Activated CD4-positive, alpha-beta memory T cell treated with anti-CD3 and anti-CD28 coated beads for 36 hours (primary cell): ENCODE measurements at regions of chr9 and their contacts with region 1.

Region 1: GRCh38 chr9:137129456-137130175 is 9.3 kb upstream of the GRIN1 start:
- DNase-seq: peak; percentile 94
- H3K4me3 Mint-ChIP-seq: peak overlapping the region; percentile 84
- H3K27ac Mint-ChIP-seq: peak overlapping the region; percentile 70
- H3K4me1 Mint-ChIP-seq: peaks cover 20% of the 10 kb centered on the region
- H3K27me3 Mint-ChIP-seq: peaks cover 2% of the 10 kb centered on the region

Region 2: GRCh38 chr9:137053944-137054931 is 75.4 kb before region 1 on chr9 and contains the start of gene ENTPD2:
- CTCF ChIA-PET with region 1: no interaction called
- POLR2A ChIA-PET with region 1: no interaction called
- intact Hi-C with region 1: no loop called
- DNase-seq: peak; percentile 58
- H3K4me3 Mint-ChIP-seq: no peak within 1 kb of the TSS
- H3K27ac Mint-ChIP-seq: no peak within 1 kb of the TSS
- H3K4me1 Mint-ChIP-seq: no peaks in the 10 kb centered on the region
- H3K27me3 Mint-ChIP-seq: peaks cover 24% of the 10 kb centered on the region
- total RNA-seq, gene ENTPD2: not detected

Region 3: GRCh38 chr9:137114610-137115391 is 14.8 kb before region 1 on chr9 and contains the start of gene DPP7:
- CTCF ChIA-PET with region 1: interaction called, 11 read pairs
- POLR2A ChIA-PET with region 1: interaction called, 12 read pairs
- intact Hi-C with region 1: loop called (anchors 1 kb)
- DNase-seq: peak; percentile 82
- H3K4me3 Mint-ChIP-seq: peak within 1 kb of the TSS; percentile 70
- H3K27ac Mint-ChIP-seq: no peak within 1 kb of the TSS
- H3K4me1 Mint-ChIP-seq: peaks cover 18% of the 10 kb centered on the region
- H3K27me3 Mint-ChIP-seq: no peaks in the 10 kb centered on the region
- total RNA-seq, gene DPP7: 195 to 208 TPM

Region 4: DNA sequence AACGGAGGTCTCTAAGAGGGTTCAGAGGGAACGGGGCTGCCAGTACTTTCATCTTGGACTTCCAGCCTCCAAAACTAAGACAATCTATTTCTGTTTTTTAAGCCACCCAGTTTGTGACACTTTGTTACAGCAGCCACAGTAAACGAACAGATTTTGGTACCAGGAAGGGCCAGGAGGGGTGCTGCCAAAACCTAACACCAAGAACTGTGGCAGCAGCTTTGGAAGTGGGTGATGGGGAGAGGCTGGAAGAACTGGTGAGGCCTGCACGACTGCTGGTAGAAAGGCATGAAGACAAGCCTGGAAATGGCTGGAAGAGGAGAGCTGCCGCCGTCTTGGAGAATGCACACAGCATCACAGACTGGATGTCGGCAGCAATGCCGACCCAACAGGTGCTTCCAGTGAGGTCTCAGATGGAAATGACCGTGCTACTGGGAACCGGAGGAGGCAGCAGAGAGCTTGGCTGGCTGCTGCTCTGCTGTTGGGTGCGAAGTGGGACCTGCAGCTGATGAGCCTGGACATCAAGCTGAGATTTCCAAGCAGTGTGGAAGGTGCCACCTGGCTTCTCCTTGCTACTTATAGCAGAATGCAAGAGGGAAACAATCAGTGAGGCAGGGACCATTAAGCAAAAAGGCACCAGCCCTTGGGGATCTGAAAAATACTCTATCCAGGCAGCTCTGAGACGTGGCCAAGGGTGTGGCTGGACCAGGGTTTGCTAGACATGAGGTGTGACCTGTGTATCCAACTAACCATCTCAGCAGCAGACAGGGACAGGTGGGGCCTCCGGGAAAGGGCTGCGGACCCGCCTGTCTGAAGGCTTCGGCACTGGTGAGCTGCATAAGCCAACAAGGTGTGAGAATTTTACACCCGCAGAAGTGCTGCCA is 46.9 kb after region 1 on chr9:
- CTCF ChIA-PET with region 1: interaction called, 13 read pairs
- POLR2A ChIA-PET with region 1: no interaction called
- intact Hi-C with region 1: no loop called
- DNase-seq: peak; percentile 45
- H3K4me3 Mint-ChIP-seq: no peak overlapping the region
- H3K27ac Mint-ChIP-seq: no peak overlapping the region
- H3K4me1 Mint-ChIP-seq: no peaks in the 10 kb centered on the region
- H3K27me3 Mint-ChIP-seq: peaks cover 6% of the 10 kb centered on the region

Region 5: GRCh38 chr9:137188490-137189296 is 59.1 kb after region 1 on chr9 and contains the starts of genes ANAPC2 and SSNA1:
- CTCF ChIA-PET with region 1: interaction called, 11 read pairs
- POLR2A ChIA-PET with region 1: interaction called, 13 read pairs
- intact Hi-C with region 1: loop called (anchors 1 kb)
- DNase-seq: peak; percentile 95
- H3K4me3 Mint-ChIP-seq: peak within 1 kb of the TSS; percentile 97
- H3K27ac Mint-ChIP-seq: peak within 1 kb of the TSS; percentile 93
- H3K4me1 Mint-ChIP-seq: peaks cover 40% of the 10 kb centered on the region
- H3K27me3 Mint-ChIP-seq: no peaks in the 10 kb centered on the region
- total RNA-seq, gene ANAPC2: 36.3 to 36.9 TPM
- total RNA-seq, gene SSNA1: 58.9 to 62.1 TPM

Region 6: DNA sequence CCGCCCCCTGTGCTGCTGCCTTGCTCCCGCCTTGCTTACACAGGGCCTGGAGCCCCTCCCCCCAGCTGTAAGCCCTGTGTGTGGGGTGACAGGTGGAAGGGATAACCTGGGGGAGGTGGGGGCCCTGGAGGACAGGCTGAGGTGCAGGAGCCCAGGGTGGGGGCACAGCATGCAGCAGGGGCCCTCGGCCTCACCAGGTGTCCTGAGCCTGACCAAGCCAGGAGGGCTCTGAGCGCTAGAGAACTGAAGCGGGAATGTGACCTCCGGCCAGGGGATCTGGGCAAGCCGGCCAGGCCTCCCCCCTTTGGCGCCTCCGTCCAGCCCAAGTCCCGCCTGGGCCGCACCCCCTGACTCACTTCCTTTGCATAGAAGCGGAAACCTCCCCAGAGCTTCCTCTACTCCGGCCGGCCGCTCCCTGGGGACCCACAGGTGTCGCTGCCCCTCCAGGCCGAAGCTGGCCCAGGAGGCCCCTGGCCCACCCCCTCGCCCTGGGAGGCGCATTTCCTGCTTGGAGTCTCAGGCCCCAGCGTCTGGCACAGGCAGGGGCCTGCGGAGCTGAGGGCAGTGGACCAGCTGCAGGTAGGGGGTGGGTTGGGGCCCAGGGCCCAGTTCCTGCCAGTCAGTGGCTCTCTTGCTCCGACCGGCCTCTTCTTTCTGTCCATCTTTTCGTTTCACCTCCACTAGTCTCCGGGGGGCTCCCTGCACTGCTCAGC is 147.9 kb after region 1 on chr9 and contains the start of gene TOR4A:
- CTCF ChIA-PET with region 1: no interaction called
- POLR2A ChIA-PET with region 1: no interaction called
- intact Hi-C with region 1: no loop called
- DNase-seq: peak; percentile 67
- H3K4me3 Mint-ChIP-seq: peak within 1 kb of the TSS; percentile 75
- H3K27ac Mint-ChIP-seq: peak within 1 kb of the TSS; percentile 46
- H3K4me1 Mint-ChIP-seq: peaks cover 8% of the 10 kb centered on the region
- H3K27me3 Mint-ChIP-seq: no peaks in the 10 kb centered on the region
- total RNA-seq, gene TOR4A: 6.6 to 6.8 TPM

Region 7: GRCh38 chr9:137785704-137786161 is 656.1 kb after region 1 on chr9:
- CTCF ChIA-PET with region 1: no interaction called
- POLR2A ChIA-PET with region 1: no interaction called
- intact Hi-C with region 1: no loop called
- DNase-seq: no peak
- H3K4me3 Mint-ChIP-seq: no peak overlapping the region
- H3K27ac Mint-ChIP-seq: no peak overlapping the region
- H3K4me1 Mint-ChIP-seq: peaks cover 5% of the 10 kb centered on the region
- H3K27me3 Mint-ChIP-seq: no peaks in the 10 kb centered on the region